WTC11 (cell line): ENCODE measurements at regions of chr20 and their contacts with region 1.

Region 1: GRCh38 chr20:62500237-62500864 is 24.6 kb upstream of the GATA5 start:
- DNase-seq: peak; percentile 88
- ATAC-seq: peak; percentile 64
- H3K4me3 Mint-ChIP-seq: no peak overlapping the region
- H3K27ac Mint-ChIP-seq: peak overlapping the region; percentile 0; the same call in 1 of the 2 replicates
- H3K4me1 Mint-ChIP-seq: peaks cover 3% of the 10 kb centered on the region
- H3K27me3 Mint-ChIP-seq: peaks cover 5% of the 10 kb centered on the region; the same call in 1 of the 2 replicates
- CTCF ChIP-seq: peak; percentile 82

Region 2: DNA sequence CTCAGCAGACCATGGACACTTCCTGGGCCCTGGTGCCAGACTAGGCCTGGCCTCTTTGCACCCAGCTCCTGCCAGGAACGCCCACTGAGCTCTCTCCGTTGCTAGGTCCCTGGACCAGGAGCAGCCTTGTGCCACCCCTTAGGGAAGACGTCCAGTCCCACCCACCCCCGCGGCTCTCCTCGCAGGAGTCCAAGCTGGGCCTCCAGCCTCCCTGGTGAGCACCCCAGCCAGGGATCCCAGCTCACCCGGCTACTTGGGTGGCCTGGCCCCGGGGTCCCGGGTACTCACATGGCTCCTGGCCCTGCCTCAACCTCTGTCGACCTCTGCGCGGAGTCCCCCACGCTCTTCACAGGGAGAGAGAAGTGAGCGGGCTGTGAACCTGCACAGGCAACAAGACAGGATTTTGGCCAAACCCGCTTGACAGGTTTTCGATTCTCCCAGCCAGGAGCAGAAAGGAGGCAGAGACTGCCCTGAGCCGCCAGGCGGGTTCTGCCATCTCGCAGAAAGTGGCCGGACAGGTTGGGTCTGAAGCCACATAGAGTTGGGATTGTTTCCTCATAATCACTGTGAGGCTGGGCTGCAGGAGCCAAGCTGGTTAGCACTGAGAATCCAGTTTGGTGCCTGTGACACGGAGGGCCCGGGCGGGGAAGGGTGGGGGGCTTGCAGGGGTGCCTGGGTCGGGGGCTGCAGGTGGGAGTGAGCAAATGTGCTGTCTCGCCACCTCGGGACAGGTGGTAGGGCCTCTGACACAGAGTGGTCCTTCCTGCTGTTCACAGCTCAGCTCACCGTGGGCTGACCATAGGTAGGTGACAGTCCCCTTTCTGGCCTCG is 73.0 kb before region 1 on chr20 and contains the start of gene RBBP8NL:
- CTCF ChIA-PET with region 1: interaction called, 14 read pairs
- POLR2A ChIA-PET with region 1: no interaction called
- DNase-seq: peak; percentile 86
- ATAC-seq: peak; percentile 68
- H3K4me3 Mint-ChIP-seq: no peak within 1 kb of the TSS; the same call in 1 of the 2 replicates
- H3K27ac Mint-ChIP-seq: peak within 1 kb of the TSS; percentile 63
- H3K4me1 Mint-ChIP-seq: peaks cover 41% of the 10 kb centered on the region
- H3K27me3 Mint-ChIP-seq: no peaks in the 10 kb centered on the region; the same call in 1 of the 2 replicates
- CTCF ChIP-seq: no peak
- total RNA-seq, gene RBBP8NL: 0.99 to 1.5 TPM (median 1.4 TPM) in 3 replicates

Region 3: DNA sequence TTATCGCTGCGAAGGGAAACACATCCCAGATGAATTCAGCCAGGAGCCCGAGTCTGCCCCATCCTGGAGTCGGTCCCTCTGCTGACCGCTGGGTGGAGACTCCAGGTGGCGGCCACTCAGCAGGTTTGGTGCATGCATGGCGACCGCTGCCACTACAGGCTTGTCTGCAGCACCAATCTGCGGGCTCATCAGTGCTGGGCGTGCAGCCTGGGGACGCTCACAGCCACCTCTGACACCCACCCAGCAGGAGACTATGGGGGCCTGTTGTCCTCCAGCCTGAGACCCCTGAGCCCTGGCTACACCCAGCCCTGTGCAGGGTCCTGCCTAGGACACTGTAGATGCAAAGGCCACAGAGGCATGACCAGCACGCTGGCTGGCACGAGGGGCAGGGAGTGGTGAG is 16.0 kb after region 1 on chr20:
- CTCF ChIA-PET with region 1: interaction called, 13 read pairs
- POLR2A ChIA-PET with region 1: no interaction called
- DNase-seq: peak; percentile 41
- ATAC-seq: peak; percentile 60; the same call in 1 of the 2 replicates
- H3K4me3 Mint-ChIP-seq: no peak overlapping the region
- H3K27ac Mint-ChIP-seq: no peak overlapping the region
- H3K4me1 Mint-ChIP-seq: no peaks in the 10 kb centered on the region; the same call in 1 of the 2 replicates
- H3K27me3 Mint-ChIP-seq: no peaks in the 10 kb centered on the region
- CTCF ChIP-seq: no peak

Region 4: GRCh38 chr20:62536871-62537401 is 36.6 kb after region 1 on chr20:
- CTCF ChIA-PET with region 1: interaction called, 16 read pairs
- POLR2A ChIA-PET with region 1: no interaction called
- DNase-seq: no peak
- ATAC-seq: no peak
- H3K4me3 Mint-ChIP-seq: no peak overlapping the region
- H3K27ac Mint-ChIP-seq: no peak overlapping the region
- H3K4me1 Mint-ChIP-seq: no peaks in the 10 kb centered on the region
- H3K27me3 Mint-ChIP-seq: no peaks in the 10 kb centered on the region
- CTCF ChIP-seq: no peak

Region 5: DNA sequence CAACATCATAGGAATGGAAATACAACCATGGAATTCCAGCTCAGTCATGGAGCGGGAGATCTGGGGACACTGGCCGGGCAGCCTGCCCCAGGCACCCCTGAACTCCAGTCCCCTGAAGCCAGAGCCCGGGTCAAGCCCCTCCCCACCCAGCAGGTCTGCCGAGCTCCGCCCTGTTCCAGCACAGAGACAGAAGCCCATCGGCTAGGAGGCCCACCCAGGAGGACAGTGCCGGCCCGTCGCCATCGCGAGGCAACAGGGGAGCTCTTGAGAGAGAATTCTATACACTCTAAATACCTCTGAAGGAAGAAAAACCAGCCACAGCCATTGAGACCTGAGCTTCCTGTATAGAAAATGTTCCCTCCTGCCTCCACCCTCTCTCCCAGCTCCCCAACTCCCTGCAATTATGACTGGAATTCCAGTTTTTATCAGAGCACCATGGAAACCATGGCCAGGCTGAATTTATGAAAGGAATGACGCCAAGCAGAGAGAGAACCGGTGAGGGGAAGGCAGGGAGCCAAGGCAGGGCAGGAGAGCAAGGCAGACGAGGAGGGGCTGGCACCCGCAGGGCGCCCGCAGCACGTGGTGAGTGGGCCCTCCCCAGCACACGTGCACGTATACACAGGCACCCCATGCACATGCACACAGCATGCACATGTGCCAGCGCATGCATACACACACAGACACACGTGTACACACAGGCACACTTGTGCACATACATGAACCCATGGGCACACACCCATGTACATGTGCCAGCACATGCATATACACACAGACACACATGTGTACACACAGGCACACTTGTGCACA is 268.3 kb after region 1 on chr20:
- CTCF ChIA-PET with region 1: no interaction called
- POLR2A ChIA-PET with region 1: no interaction called
- DNase-seq: peak; percentile 39
- ATAC-seq: peak; percentile 58
- H3K4me3 Mint-ChIP-seq: no peak overlapping the region
- H3K27ac Mint-ChIP-seq: peak overlapping the region; percentile 57
- H3K4me1 Mint-ChIP-seq: 0 out of 2 replicates have a peak, but pooled peaks cover 2% of the 10 kb centered on the region
- H3K27me3 Mint-ChIP-seq: no peaks in the 10 kb centered on the region
- CTCF ChIP-seq: no peak